ENCODE measurements at regions of chr3 and their contacts with region 1.

Region 1: GRCh38 chr3:39126532-39127071 is 19.1 kb downstream of the TTC21A start:
- DNase-seq: no peak
- H3K4me3 ChIP-seq: no peak overlapping the region
- H3K27me3 ChIP-seq: no peaks in the 10 kb centered on the region
- CTCF ChIP-seq: peak; percentile 63

Region 2: GRCh38 chr3:38966811-38967692 is 159.6 kb before region 1 on chr3:
- CTCF ChIA-PET with region 1: no interaction called
- POLR2A ChIA-PET with region 1: no interaction called
- DNase-seq: no peak
- H3K4me3 ChIP-seq: no peak overlapping the region
- H3K27me3 ChIP-seq: peaks cover 2% of the 10 kb centered on the region
- CTCF ChIP-seq: no peak

Region 3: DNA sequence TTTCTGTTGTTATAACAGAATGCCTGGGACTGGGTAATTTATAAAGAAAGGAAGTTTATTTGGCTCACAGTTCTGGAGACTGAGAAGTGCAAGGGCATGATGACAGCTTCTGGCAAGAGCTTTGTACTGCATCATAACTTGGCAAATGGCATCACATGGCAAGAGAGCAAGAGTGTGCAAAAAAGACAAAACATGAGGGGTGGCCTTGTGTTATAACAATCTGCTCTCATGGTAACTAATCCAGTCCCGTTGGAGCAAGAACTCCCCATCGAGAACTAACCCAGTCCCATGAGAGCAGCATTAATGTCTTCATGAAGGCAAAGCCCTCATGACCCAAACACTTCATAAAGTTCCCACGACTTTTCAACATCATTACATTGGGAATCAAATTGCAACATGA is 98.1 kb before region 1 on chr3:
- CTCF ChIA-PET with region 1: no interaction called
- POLR2A ChIA-PET with region 1: no interaction called
- DNase-seq: no peak
- H3K4me3 ChIP-seq: no peak overlapping the region
- H3K27me3 ChIP-seq: peaks cover 2% of the 10 kb centered on the region
- CTCF ChIP-seq: no peak

Region 4: DNA sequence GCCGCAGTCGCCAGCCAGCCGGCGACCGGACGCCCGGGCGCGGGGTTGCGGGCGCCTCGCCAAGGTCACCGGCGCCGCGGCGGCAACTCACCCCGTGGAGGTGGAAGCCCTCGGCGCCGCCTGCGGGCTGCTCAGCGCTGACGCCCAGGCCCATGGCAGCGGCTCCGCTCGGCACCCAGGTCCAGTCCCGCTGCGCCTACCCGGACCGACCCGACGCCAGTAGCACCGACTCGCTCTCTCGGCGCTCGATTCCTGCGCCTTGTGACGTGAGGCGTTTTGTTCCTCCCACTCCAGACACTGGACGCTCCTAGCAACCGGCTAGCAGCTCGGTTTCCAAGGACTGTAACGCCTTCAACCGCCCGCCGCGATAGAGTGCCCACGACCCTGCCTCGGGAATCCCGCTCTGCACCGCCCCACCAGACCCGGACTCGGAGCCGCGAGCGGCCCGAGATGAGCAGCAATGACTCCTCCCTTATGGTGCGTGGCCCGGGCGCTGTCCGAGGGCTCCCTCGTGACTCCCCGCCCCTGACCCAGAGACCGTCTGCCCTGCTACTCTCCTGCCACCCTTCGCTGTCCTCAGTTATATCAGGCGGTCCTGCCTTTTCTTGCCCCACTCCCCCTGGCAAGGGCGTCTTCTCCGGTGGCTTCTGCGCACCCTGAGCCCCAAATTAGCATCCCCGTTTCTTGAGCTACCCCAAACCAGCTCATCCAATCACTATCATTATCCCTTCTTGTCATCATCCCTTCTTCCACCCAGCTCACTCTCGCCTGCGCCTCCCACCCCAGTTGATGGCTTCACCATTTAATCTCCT is 19.0 kb before region 1 on chr3 and contains the starts of genes GORASP1 and TTC21A:
- CTCF ChIA-PET with region 1: interaction called, 25 read pairs
- POLR2A ChIA-PET with region 1: no interaction called
- DNase-seq: peak; percentile 41
- H3K4me3 ChIP-seq: peak within 1 kb of the TSS; percentile 89
- H3K27me3 ChIP-seq: no peaks in the 10 kb centered on the region
- CTCF ChIP-seq: no peak
- polyA plus RNA-seq, gene GORASP1: 58.3 and 87.0 TPM in 2 replicates
- polyA plus RNA-seq, gene TTC21A: 2.3 and 3.1 TPM in 2 replicates

Region 5: DNA sequence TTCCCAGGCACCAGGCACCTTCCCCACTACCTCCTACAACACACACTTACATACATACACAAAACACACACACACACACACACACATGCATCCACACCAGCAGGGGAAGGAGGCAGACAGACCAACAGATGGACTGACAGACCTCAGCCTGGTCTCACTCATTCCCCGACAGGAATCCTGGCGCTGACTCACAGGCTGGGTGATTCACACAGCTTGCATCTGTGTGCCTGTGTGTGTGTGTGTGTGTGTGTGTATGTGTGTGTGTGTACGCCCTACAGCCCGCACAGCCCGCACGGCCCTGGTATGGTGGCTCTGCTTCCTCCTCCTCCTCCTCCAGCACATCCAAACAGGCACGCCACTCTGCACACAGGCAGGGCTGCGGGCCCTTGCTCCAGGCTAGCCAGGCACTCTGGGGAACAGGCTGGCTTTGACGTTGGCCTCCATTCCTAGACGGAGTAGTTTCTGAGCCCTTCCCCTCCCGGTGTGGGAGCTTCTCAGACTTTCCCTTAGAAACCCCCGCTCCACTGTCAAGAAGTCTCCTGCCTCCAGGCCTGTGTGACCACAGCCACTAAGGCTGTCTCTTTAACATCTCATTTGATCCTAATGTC is 20.5 kb after region 1 on chr3:
- CTCF ChIA-PET with region 1: interaction called, 66 read pairs
- POLR2A ChIA-PET with region 1: no interaction called
- DNase-seq: peak; percentile 77
- H3K4me3 ChIP-seq: no peak overlapping the region
- H3K27me3 ChIP-seq: no peaks in the 10 kb centered on the region
- CTCF ChIP-seq: no peak

Region 6: DNA sequence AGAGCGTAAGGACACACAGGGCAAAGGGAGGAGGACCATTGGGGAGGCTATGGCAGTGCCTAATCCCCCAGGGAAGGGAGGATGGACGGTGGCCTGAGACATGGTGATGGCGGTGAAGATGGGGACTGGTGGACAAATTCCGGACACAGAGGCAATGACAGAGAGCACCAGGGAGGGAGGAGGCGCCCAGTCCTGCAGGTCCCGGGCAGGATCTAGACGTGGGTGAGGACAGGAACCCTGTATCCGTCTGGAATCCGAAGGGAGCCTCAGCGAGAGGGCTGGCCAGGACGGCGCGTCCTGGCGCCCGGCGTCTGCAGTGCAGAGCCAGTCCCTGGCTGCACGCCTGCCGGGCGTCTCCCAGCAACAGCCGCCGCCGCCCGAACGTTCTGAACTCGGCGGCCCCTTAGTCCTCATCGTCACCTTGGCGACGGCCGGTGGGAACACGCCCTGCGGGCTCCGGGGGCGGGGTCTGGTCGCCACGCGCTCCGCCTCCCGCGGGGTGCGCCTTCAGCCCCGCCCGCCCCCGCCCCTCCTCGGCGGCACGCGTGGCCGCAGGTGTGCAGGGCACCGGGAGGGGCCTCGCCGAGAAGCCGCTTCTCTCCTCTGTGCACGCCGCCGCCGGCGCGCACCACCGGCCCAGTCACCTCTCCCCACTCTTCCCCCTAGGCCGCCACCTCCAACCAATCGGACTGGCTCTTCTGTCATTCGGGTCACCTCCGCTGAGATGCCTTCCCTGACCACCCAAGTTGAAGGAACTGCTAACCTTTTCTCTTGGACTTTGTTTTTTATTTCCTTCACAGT is 54.1 kb after region 1 on chr3:
- CTCF ChIA-PET with region 1: interaction called, 110 read pairs
- POLR2A ChIA-PET with region 1: no interaction called
- DNase-seq: peak; percentile 30
- H3K4me3 ChIP-seq: peak overlapping the region; percentile 40
- H3K27me3 ChIP-seq: no peaks in the 10 kb centered on the region
- CTCF ChIP-seq: peak; percentile 44

Region 7: GRCh38 chr3:39279745-39280517 is 153.3 kb after region 1 on chr3 and contains the start of gene CX3CR1:
- CTCF ChIA-PET with region 1: interaction called, 11 read pairs
- POLR2A ChIA-PET with region 1: interaction called, 18 read pairs
- DNase-seq: no peak
- H3K4me3 ChIP-seq: no peak within 1 kb of the TSS
- H3K27me3 ChIP-seq: peaks cover 2% of the 10 kb centered on the region; the same call in 1 of the 2 replicates
- CTCF ChIP-seq: no peak
- polyA plus RNA-seq, gene CX3CR1: 0.45 and 0.51 TPM in 2 replicates

Measured in BJ (cell line).